ENCODE measurements at regions of chr6 and their contacts with region 1.

Region 1: DNA sequence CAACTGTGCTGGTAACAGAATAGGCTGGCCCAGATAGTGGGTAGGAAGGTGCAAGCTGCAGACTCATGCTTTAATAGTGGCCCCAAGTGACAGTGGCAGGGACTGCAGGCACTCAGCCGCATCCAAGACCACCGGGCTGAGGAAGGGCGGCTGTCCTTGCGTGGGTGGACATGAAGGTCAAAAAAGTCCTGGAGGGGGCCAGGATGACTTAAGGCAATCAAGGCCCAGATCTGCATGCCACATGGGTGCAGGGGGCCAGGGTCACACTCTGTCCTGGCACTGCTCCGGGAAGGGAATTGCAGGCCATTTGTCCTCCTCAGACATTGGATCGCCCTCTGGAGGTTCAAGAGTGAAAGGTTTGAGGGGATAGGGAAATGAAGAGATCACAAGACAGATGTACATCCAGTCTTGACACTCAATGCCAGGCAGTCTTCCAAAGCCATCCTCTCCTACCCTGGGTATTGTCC is 10.4 kb upstream of the VNN2 start:
- DNase-seq: peak; percentile 56
- H3K4me3 ChIP-seq: no peak overlapping the region
- H3K27ac ChIP-seq: no peak overlapping the region
- H3K4me1 ChIP-seq: no peaks in the 10 kb centered on the region
- H3K27me3 ChIP-seq: no peaks in the 10 kb centered on the region
- CTCF ChIP-seq: peak; percentile 48

Region 2: DNA sequence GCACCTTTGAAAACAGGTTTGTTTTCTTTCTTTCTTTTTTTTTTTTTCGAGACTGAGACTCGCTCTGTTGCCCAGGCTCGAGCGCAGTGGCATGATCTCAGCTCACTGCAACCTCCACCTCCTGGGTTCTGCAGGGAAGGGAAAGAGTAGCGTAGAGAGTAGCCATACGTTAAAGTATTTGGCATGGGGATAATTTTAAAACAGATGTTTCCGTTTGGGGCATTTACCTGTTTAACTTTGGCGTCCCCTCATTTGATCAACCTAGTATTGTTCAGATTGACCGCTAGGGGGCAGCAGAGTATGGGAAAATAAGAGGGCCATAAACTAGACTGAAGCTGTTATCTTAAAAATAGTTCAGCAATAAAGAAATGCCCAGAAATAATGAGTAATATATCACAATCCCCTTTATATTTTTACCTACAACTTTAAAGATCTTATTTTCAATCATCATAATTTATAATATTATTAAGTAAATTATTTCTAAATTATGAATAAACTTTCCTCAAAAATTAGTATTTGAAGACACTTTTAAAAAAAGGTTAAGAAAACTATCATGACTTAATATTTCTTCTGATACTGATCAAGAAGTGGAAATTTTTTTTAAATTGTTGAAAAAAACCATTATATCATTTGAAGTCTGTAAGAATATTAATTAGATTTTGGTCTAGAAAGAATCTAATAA is 237.7 kb before region 1 on chr6:
- intact Hi-C with region 1: loop called (anchors 5 kb)
- DNase-seq: peak; percentile 74
- H3K4me3 ChIP-seq: no peak overlapping the region
- H3K27ac ChIP-seq: no peak overlapping the region
- H3K4me1 ChIP-seq: no peaks in the 10 kb centered on the region
- H3K27me3 ChIP-seq: no peaks in the 10 kb centered on the region
- CTCF ChIP-seq: peak; percentile 89

Region 3: GRCh38 chr6:132812756-132813172 is 44.7 kb after region 1 on chr6:
- intact Hi-C with region 1: no loop called
- DNase-seq: no peak
- H3K4me3 ChIP-seq: peak overlapping the region; percentile 71
- H3K27ac ChIP-seq: peak overlapping the region; percentile 91
- H3K4me1 ChIP-seq: peaks cover 6% of the 10 kb centered on the region
- H3K27me3 ChIP-seq: no peaks in the 10 kb centered on the region
- CTCF ChIP-seq: no peak

Measured in colonic mucosa (tissue), 4 donors.